CD8-positive, alpha-beta T cell (primary cell): ENCODE measurements at regions of chr6 and their contacts with region 1.

Region 1: DNA sequence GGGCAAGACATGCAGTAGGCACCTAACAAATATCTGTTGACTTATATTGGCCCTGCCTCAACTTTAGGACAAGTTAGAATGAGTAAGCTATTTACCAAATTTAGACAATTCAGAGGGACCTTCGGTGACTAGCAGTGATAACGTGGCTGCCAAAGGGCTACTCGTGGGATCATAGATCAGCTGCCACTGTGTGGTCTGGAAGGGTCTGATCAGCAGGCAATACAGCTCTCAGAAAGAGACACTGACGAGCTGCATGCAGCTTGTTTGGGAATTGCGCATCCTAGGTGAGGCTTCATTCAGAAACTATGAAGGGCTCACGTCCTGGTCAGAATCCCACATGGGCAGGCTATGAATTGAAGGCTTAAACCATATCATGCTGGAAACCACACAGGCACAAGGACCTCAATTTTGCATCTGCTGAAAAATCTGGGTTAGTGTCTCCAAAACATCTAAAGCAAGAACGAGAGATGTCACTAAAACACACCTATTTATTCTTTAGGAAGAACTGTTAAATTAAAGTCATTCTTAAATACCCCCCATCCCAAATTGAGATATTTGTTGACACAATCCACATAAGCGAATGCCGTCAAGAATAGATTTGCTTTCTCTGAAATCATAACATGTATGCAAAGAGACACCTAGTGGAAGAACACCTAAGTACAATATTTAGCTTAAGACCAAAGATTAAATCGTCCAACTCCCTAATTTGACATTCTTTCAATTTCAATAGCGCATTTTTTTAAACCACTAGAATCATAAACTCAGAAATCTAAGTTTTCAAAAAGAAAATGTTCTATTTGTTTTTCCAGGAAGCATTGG is 79.6 kb downstream of the IPCEF1 start:
- DNase-seq: peak in 2 of 9 experiments; percentile 64 to 80
- ATAC-seq: peak; percentile 89
- H3K4me3 ChIP-seq: peak overlapping the region; percentile 20 to 31
- H3K4me3 Mint-ChIP-seq: peak overlapping the region; percentile 66
- H3K27ac ChIP-seq: no peak overlapping the region
- H3K27ac Mint-ChIP-seq: peak overlapping the region; percentile 64
- H3K4me1 ChIP-seq: peaks cover 23% of the 10 kb centered on the region
- H3K4me1 Mint-ChIP-seq: peaks cover 42% of the 10 kb centered on the region
- H3K27me3 ChIP-seq: no peaks in the 10 kb centered on the region
- H3K27me3 Mint-ChIP-seq: no peaks in the 10 kb centered on the region
- CTCF ChIP-seq: peak; percentile 72

Region 2: DNA sequence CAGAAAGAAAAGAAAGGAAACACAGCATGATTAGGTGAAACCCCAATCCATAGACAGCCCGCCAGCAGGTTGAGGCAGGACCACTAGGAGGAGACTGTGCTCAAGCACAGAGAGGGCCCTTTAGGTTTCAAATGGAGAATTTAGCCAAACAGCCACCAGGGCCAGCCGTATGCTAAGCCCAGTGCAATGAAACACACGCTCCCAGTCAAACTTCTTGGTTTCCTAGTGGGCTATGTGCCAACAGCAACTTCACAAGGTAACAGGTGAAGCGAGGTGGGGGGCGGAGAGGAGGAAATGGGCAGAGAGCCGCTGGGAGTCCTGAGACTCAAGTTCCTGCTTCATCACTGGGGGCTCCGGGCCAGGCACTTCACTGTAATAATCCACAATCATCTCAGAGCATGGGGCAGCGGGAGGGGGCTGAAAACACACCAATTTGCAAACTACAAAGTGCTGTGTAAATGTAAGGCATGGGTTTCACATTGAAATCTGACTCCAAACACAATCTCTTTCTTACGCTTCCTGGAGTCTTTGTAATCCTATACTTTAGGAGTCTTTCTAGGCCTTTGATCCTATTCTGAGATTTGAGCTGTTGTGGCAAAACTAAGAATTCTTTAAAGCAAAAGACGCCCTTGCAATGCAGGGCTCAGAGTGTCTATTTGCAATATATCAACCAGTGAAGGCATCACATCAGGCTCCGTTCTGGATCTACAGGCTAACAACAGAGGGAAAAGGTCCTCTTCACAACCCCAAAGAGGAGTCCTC is 120.7 kb before region 1 on chr6:
- CTCF ChIA-PET with region 1: interaction called, 383 read pairs
- POLR2A ChIA-PET with region 1: interaction called, 11 read pairs
- intact Hi-C with region 1: loop called (anchors 1 kb)
- DNase-seq: peak; percentile 34 to 84 (median 60)
- ATAC-seq: peak; percentile 92
- H3K4me3 ChIP-seq: peak overlapping the region; percentile 28 to 40
- H3K4me3 Mint-ChIP-seq: peak overlapping the region; percentile 82
- H3K27ac ChIP-seq: peak overlapping the region; percentile 42 to 83
- H3K27ac Mint-ChIP-seq: peak overlapping the region; percentile 92
- H3K4me1 ChIP-seq: peaks cover 37% of the 10 kb centered on the region
- H3K4me1 Mint-ChIP-seq: peaks cover 56% of the 10 kb centered on the region
- H3K27me3 ChIP-seq: no peaks in the 10 kb centered on the region
- H3K27me3 Mint-ChIP-seq: no peaks in the 10 kb centered on the region
- CTCF ChIP-seq: peak; percentile 76

Region 3: GRCh38 chr6:154218301-154218700 is 58.7 kb before region 1 on chr6:
- CTCF ChIA-PET with region 1: interaction called, 25 read pairs
- POLR2A ChIA-PET with region 1: interaction called, 4 read pairs
- intact Hi-C with region 1: loop called (anchors 2 to 5 kb)
- DNase-seq: peak in 1 of 9 experiments; percentile 24
- ATAC-seq: peak; percentile 44
- H3K4me3 ChIP-seq: no peak overlapping the region
- H3K4me3 Mint-ChIP-seq: peak overlapping the region; percentile 44
- H3K27ac ChIP-seq: peak overlapping the region in 1 of 2 experiments; percentile 27
- H3K27ac Mint-ChIP-seq: peak overlapping the region; percentile 88
- H3K4me1 ChIP-seq: peaks cover 44% of the 10 kb centered on the region
- H3K4me1 Mint-ChIP-seq: peaks cover 66% of the 10 kb centered on the region
- H3K27me3 ChIP-seq: no peaks in the 10 kb centered on the region
- H3K27me3 Mint-ChIP-seq: no peaks in the 10 kb centered on the region
- CTCF ChIP-seq: no peak

Region 4: DNA sequence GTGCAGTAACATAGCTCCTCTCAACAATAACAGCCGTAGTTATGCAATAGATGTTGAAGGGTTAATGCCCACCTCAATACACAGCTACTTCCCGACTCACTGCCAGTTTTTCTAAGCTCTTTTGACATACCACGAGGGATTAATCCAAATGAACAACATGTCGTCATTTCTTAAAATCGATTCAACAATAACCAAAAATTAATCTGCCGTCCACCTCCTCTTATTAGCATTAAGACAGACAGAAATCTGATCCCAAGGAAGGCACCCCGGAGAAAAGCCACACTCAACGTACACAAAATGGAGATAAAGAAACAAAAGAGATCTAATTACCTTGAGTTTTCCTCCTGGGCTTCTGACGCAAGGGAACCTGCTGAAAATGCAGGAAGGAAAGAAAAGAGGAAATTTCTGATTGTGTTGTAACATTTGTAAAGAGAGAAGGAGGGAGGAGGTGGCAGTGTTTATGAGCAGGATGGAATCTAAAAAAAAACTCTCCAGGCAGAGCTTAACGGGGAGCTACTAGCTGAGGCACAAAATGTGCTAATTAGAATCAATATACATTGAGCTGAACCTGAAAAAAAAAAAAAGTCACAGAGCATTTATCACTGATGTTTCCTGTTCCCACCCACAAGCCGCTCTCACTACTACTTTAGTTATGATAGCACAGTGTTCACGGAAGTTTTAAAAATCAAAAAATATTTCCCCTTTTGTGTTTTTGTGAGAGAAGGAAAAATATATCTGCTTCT is 29.7 kb before region 1 on chr6:
- CTCF ChIA-PET with region 1: interaction called, 40 read pairs
- POLR2A ChIA-PET with region 1: interaction called, 21 read pairs
- intact Hi-C with region 1: loop called (anchors 1 to 2 kb)
- DNase-seq: peak in 4 of 9 experiments; percentile 45 to 79 (median 60)
- ATAC-seq: peak; percentile 43
- H3K4me3 ChIP-seq: peak overlapping the region; percentile 60 to 69
- H3K4me3 Mint-ChIP-seq: peak overlapping the region; percentile 94
- H3K27ac ChIP-seq: peak overlapping the region; percentile 75 to 92
- H3K27ac Mint-ChIP-seq: peak overlapping the region; percentile 93
- H3K4me1 ChIP-seq: peaks cover 65% of the 10 kb centered on the region
- H3K4me1 Mint-ChIP-seq: peaks cover 83% of the 10 kb centered on the region
- H3K27me3 ChIP-seq: no peaks in the 10 kb centered on the region
- H3K27me3 Mint-ChIP-seq: no peaks in the 10 kb centered on the region
- CTCF ChIP-seq: no peak

Region 5: DNA sequence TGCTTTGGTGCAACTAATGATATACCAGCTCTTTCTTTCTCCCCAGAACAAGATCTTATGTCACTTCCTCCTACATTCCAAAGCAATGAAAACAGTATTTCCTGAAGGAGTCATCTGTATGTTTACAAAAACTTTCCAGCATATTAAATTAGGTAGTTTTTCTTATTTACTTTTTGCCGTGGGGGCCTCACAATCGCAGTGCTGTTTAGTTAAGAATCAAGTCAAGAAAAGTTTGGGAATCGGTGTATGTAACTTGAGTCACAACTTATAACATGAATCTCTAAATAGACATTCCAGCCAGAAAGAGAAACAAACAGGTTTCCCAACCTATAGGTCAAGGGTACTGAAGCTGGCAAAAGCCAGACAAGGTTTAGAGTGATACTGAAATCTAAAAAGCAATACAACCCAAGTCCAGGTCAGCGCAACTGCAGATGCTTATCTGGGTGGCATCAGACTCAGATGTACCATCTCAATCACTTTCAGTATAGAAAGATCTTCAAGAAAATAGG is 15.9 kb after region 1 on chr6:
- CTCF ChIA-PET with region 1: interaction called, 13 read pairs
- POLR2A ChIA-PET with region 1: no interaction called
- intact Hi-C with region 1: no loop called
- DNase-seq: no peak
- ATAC-seq: no peak
- H3K4me3 ChIP-seq: no peak overlapping the region
- H3K4me3 Mint-ChIP-seq: no peak overlapping the region
- H3K27ac ChIP-seq: no peak overlapping the region
- H3K27ac Mint-ChIP-seq: no peak overlapping the region
- H3K4me1 ChIP-seq: no peaks in the 10 kb centered on the region
- H3K4me1 Mint-ChIP-seq: no peaks in the 10 kb centered on the region
- H3K27me3 ChIP-seq: no peaks in the 10 kb centered on the region
- H3K27me3 Mint-ChIP-seq: no peaks in the 10 kb centered on the region
- CTCF ChIP-seq: no peak

Region 6: GRCh38 chr6:154675602-154676088 is 398.6 kb after region 1 on chr6:
- CTCF ChIA-PET with region 1: interaction called, 3 read pairs
- POLR2A ChIA-PET with region 1: no interaction called
- intact Hi-C with region 1: loop called in 1 of 2 experiments (anchors 10 kb)
- DNase-seq: peak; percentile 77 to 95 (median 85)
- ATAC-seq: peak; percentile 100
- H3K4me3 ChIP-seq: no peak overlapping the region
- H3K4me3 Mint-ChIP-seq: no peak overlapping the region
- H3K27ac ChIP-seq: no peak overlapping the region
- H3K27ac Mint-ChIP-seq: no peak overlapping the region
- H3K4me1 ChIP-seq: no peaks in the 10 kb centered on the region
- H3K4me1 Mint-ChIP-seq: no peaks in the 10 kb centered on the region
- H3K27me3 ChIP-seq: no peaks in the 10 kb centered on the region
- H3K27me3 Mint-ChIP-seq: no peaks in the 10 kb centered on the region
- CTCF ChIP-seq: peak; percentile 100